ENCODE measurements at regions of chr13 and their contacts with region 1.

Region 1: DNA sequence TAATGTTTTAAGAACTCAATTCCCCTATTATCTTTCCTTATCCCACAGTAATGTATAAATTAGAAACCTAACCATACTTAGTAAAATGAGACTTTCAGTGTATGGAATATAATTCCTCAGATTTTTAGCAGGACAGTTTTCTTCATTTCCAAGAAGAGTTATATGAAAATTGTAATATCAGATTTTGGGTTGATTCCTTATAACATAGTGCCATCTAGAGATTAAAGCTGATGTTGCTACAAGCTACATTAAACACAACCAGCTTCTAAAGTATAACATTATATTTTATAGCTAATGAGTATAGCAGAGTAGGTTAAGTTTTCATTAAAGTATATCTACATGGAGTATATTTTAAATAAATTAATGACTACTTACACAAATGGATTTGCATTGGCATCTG is 99.7 kb upstream of the MIR17HG start:
- DNase-seq: no peak
- H3K4me3 ChIP-seq: no peak overlapping the region
- H3K4me3 Mint-ChIP-seq: no peak overlapping the region
- H3K27ac Mint-ChIP-seq: no peak overlapping the region
- H3K4me1 ChIP-seq: peaks cover 12% of the 10 kb centered on the region
- H3K4me1 Mint-ChIP-seq: no peaks in the 10 kb centered on the region
- H3K27me3 ChIP-seq: no peaks in the 10 kb centered on the region; the same call in 1 of the 2 replicates
- H3K27me3 Mint-ChIP-seq: peaks cover 11% of the 10 kb centered on the region
- CTCF ChIP-seq: peak; percentile 24 to 40

Region 2: DNA sequence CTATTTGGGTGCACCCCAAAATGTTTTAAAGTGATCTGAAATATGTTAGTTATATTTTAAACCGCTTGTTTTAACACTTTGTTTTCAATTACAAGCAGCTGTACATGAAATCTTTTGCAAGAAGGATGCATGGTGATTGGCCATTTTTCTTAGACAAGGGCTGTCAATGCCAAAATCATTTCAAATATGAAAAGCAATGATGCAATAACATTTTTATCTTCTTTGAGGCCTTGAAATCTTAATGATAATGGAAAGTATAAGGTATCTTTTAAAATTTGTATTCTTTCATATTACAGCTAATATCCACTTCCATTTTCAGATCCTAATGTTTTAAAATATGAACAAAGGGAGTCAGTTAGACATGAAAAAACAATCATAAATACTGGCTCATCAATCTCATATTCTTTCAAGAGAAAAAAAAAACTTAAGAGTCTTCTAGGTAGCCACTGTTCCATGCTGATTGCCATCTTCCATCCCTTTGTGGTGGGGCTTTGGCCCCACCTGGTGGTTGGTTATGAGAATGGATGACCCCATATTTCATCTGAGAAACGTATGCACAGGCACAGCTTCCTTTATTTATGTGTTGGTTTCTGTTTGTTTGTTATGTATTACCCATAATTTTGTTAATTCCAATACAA is 230.6 kb before region 1 on chr13:
- CTCF ChIA-PET with region 1: no interaction called
- POLR2A ChIA-PET with region 1: no interaction called
- intact Hi-C with region 1: loop called (anchors 2 kb)
- DNase-seq: peak; percentile 52 to 71
- H3K4me3 ChIP-seq: no peak overlapping the region
- H3K4me3 Mint-ChIP-seq: no peak overlapping the region
- H3K27ac Mint-ChIP-seq: no peak overlapping the region
- H3K4me1 ChIP-seq: no peaks in the 10 kb centered on the region
- H3K4me1 Mint-ChIP-seq: no peaks in the 10 kb centered on the region
- H3K27me3 ChIP-seq: no peaks in the 10 kb centered on the region
- H3K27me3 Mint-ChIP-seq: peaks cover 7% of the 10 kb centered on the region
- CTCF ChIP-seq: peak; percentile 82 to 87

Region 3: DNA sequence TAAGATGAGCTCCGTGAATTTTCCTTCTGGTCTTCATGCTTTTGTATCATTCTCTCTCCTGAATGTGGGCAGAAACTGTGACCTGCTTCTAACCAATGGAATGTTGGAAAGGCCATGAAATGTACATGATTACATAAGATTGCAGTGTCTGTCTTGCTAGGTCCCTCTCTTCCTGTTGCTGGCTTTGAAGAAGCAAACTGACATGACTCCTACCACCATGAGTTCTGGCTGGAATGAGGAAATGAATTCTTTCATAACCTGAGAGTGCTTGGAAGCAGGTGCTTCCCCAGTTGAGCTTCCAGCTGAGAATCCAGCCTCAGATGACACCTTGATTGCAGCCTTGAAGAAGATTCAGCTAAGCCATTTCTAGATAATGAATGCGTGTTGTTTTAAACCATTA is 175.3 kb before region 1 on chr13:
- CTCF ChIA-PET with region 1: no interaction called
- POLR2A ChIA-PET with region 1: no interaction called
- intact Hi-C with region 1: loop called (anchors 5 kb)
- DNase-seq: peak; percentile 65 to 69
- H3K4me3 ChIP-seq: no peak overlapping the region
- H3K4me3 Mint-ChIP-seq: peak overlapping the region; percentile 24
- H3K27ac Mint-ChIP-seq: peak overlapping the region; percentile 85
- H3K4me1 ChIP-seq: peaks cover 50% of the 10 kb centered on the region
- H3K4me1 Mint-ChIP-seq: peaks cover 45% of the 10 kb centered on the region
- H3K27me3 ChIP-seq: no peaks in the 10 kb centered on the region
- H3K27me3 Mint-ChIP-seq: no peaks in the 10 kb centered on the region
- CTCF ChIP-seq: no peak

Region 4: GRCh38 chr13:91078093-91078679 is 169.6 kb before region 1 on chr13:
- CTCF ChIA-PET with region 1: interaction called, 10 read pairs
- POLR2A ChIA-PET with region 1: no interaction called
- intact Hi-C with region 1: loop called (anchors 5 kb)
- DNase-seq: peak in 1 of 2 experiments; percentile 15
- H3K4me3 ChIP-seq: no peak overlapping the region
- H3K4me3 Mint-ChIP-seq: no peak overlapping the region
- H3K27ac Mint-ChIP-seq: no peak overlapping the region
- H3K4me1 ChIP-seq: peaks cover 17% of the 10 kb centered on the region
- H3K4me1 Mint-ChIP-seq: peaks cover 23% of the 10 kb centered on the region
- H3K27me3 ChIP-seq: no peaks in the 10 kb centered on the region
- H3K27me3 Mint-ChIP-seq: no peaks in the 10 kb centered on the region
- CTCF ChIP-seq: peak; percentile 51 to 56

Region 5: DNA sequence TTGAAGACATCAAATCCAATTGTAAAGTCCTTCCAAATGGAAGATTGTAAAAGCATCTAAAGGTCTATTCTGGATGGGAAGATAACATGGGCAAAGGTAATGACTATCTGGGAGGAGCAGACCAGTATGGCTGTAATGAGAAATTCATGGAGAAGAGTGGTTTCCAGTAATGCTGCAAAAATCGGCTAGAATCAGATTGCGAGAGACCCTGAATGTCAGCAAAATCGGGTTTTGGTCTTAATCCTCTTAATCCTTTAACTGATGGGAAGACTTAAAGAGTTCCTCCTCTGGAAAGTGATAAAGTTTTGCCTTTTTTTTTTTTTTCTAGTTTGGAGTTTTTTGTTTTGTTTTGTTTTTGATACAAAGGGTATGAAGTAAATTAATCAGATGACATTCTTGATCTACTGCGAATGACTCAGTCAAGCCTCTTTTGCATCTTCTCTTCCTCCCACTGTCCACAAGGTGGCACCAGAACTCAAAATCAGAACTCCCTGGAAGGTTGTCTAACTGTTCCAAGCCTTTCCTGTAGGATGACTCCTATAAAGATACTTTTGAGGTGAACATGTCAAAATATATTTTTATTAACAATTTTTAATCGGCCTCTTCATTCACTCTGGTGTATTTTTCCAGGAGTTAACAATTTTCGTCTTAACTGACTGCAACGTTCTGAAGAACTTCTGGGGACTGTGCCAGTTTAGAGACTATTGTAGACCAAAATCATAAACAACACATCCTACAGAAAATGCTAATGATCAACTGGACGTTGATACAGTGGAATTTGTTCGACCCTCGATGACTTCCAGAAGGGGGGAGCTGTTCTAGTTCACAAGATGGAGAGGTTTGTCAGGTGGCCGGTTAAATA is 113.6 kb before region 1 on chr13:
- CTCF ChIA-PET with region 1: no interaction called
- POLR2A ChIA-PET with region 1: no interaction called
- intact Hi-C with region 1: loop called (anchors 1 kb)
- DNase-seq: peak; percentile 69 to 72
- H3K4me3 ChIP-seq: no peak overlapping the region
- H3K4me3 Mint-ChIP-seq: no peak overlapping the region
- H3K27ac Mint-ChIP-seq: peak overlapping the region; percentile 21
- H3K4me1 ChIP-seq: peaks cover 34% of the 10 kb centered on the region
- H3K4me1 Mint-ChIP-seq: peaks cover 16% of the 10 kb centered on the region
- H3K27me3 ChIP-seq: no peaks in the 10 kb centered on the region
- H3K27me3 Mint-ChIP-seq: no peaks in the 10 kb centered on the region
- CTCF ChIP-seq: peak; percentile 90 to 94

Region 6: DNA sequence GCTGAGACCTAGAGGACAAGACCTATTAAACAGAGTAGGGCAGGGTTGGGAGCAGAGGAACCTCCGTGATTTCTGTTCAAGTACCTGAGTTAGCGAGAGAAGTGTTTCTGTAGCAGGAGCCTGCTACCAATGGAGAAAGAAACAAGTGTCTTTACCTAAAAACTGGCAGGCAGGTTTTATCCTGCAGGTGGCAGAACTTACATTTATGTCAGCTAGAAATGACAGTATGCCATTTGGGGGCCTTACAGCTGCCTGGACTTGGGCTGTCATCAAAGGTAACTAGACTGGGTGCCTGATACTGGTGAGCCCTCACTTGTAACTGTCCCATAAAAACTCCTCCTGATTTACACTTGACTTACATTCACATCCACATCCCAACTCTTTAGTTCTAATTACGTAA is 85.6 kb before region 1 on chr13:
- CTCF ChIA-PET with region 1: interaction called, 15 read pairs
- POLR2A ChIA-PET with region 1: no interaction called
- intact Hi-C with region 1: loop called (anchors 1 kb)
- DNase-seq: peak; percentile 52 to 62
- H3K4me3 ChIP-seq: no peak overlapping the region
- H3K4me3 Mint-ChIP-seq: no peak overlapping the region
- H3K27ac Mint-ChIP-seq: no peak overlapping the region
- H3K4me1 ChIP-seq: peaks cover 21% of the 10 kb centered on the region
- H3K4me1 Mint-ChIP-seq: peaks cover 29% of the 10 kb centered on the region
- H3K27me3 ChIP-seq: no peaks in the 10 kb centered on the region
- H3K27me3 Mint-ChIP-seq: no peaks in the 10 kb centered on the region
- CTCF ChIP-seq: peak in 1 of 2 experiments; percentile 20

Region 7: DNA sequence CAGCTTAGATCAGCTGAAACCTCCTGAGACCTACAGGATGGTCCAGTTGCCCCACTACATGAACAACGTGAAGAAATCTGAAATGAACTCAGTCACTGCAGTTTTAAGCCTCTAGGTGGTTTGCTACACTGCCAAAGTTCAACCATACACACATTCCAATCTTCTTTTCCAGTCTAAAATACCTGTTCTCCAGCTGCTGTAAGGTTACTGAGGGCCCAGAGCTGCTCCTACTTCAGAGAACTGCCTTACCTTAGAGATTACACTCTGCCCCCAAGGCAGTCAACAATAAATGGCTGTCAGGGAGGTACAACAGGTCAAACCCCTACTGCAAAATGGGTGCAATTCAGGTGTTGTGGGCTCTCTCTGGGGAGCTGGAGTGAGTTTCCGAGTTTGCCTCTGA is 54.4 kb before region 1 on chr13:
- CTCF ChIA-PET with region 1: interaction called, 17 read pairs
- POLR2A ChIA-PET with region 1: no interaction called
- intact Hi-C with region 1: loop called (anchors 1 kb)
- DNase-seq: peak; percentile 43 to 51
- H3K4me3 ChIP-seq: no peak overlapping the region
- H3K4me3 Mint-ChIP-seq: no peak overlapping the region
- H3K27ac Mint-ChIP-seq: no peak overlapping the region
- H3K4me1 ChIP-seq: peaks cover 11% of the 10 kb centered on the region
- H3K4me1 Mint-ChIP-seq: peaks cover 11% of the 10 kb centered on the region
- H3K27me3 ChIP-seq: peaks cover 2% of the 10 kb centered on the region; the same call in 1 of the 2 replicates
- H3K27me3 Mint-ChIP-seq: no peaks in the 10 kb centered on the region
- CTCF ChIP-seq: peak; percentile 28 to 32

Region 8: GRCh38 chr13:91520952-91521351 is 273.2 kb after region 1 on chr13:
- CTCF ChIA-PET with region 1: no interaction called
- POLR2A ChIA-PET with region 1: no interaction called
- intact Hi-C with region 1: no loop called
- DNase-seq: no peak
- H3K4me3 ChIP-seq: no peak overlapping the region
- H3K4me3 Mint-ChIP-seq: no peak overlapping the region
- H3K27ac Mint-ChIP-seq: no peak overlapping the region
- H3K4me1 ChIP-seq: no peaks in the 10 kb centered on the region
- H3K4me1 Mint-ChIP-seq: no peaks in the 10 kb centered on the region
- H3K27me3 ChIP-seq: no peaks in the 10 kb centered on the region
- H3K27me3 Mint-ChIP-seq: no peaks in the 10 kb centered on the region
- CTCF ChIP-seq: no peak

Measured in Caco-2 (cell line).